Activated T-helper 1 cell treated with anti-CD3 and anti-CD28 coated beads, Interleukin-12 subunit alpha, Interleukin-12 subunit beta, Interleukin-2, Interleukin-4 antibody, amounts not matched to agents 30 ng/mL and 10 ng/mL and 1 ng/mL, durations not matched to agents 14 hours and 24 hours and 36 hours (primary cell): ENCODE measurements at regions of chr12 and their contacts with region 1.

Region 1: DNA sequence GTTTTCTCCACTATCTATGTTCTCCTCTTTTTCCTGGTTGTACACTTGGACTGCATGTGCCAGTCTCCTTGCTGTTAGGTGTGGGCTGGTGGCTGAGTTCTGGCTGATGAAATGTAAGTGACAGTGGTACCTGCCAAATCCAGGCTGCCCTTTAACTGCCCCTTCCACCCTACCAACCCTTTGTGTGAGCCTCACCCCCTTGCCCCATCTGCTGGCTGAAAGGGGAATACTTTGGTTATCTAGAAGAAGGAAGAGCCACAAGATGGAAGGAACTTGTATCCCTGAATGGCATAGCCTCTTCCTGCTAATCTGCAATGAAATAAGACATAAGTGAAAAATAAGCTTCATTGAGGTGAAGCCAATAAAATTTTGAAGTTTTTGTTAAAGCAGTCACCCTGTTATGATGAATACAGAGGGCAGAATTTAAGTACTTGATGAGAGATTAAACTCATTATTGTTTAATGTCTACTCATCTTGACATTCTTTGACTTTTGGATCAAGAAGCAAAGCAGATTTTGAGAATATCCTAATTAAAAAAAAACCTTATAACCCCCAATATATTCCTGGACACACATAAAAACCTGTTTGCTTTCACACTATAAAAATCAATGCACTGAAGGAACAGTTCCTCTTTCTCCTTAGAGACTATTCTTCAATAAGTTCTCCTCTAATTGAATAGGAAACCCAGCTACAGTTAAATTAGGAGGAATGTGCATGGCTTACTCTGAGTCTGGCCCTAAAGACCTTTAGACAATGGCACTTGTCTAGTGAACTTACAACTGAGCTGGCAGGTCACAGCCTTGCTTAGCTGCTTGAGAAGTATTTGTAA is 262.6 kb upstream of the BTG1 start:
- DNase-seq: peak; percentile 37
- H3K4me3 Mint-ChIP-seq: no peak overlapping the region
- H3K27ac Mint-ChIP-seq: no peak overlapping the region
- H3K4me1 Mint-ChIP-seq: peaks cover 46% of the 10 kb centered on the region
- H3K27me3 Mint-ChIP-seq: no peaks in the 10 kb centered on the region

Region 2: GRCh38 chr12:91382081-91382543 is 1026.2 kb before region 1 on chr12:
- intact Hi-C with region 1: loop called (anchors 1 kb)
- DNase-seq: peak; percentile 68
- H3K4me3 Mint-ChIP-seq: peak overlapping the region; percentile 76
- H3K27ac Mint-ChIP-seq: no peak overlapping the region
- H3K4me1 Mint-ChIP-seq: peaks cover 10% of the 10 kb centered on the region
- H3K27me3 Mint-ChIP-seq: peaks cover 5% of the 10 kb centered on the region

Region 3: GRCh38 chr12:91811481-91812287 is 596.6 kb before region 1 on chr12:
- intact Hi-C with region 1: loop called (anchors 10 kb)
- DNase-seq: peak; percentile 35
- H3K4me3 Mint-ChIP-seq: no peak overlapping the region
- H3K27ac Mint-ChIP-seq: no peak overlapping the region
- H3K4me1 Mint-ChIP-seq: peaks cover 10% of the 10 kb centered on the region
- H3K27me3 Mint-ChIP-seq: no peaks in the 10 kb centered on the region

Region 4: DNA sequence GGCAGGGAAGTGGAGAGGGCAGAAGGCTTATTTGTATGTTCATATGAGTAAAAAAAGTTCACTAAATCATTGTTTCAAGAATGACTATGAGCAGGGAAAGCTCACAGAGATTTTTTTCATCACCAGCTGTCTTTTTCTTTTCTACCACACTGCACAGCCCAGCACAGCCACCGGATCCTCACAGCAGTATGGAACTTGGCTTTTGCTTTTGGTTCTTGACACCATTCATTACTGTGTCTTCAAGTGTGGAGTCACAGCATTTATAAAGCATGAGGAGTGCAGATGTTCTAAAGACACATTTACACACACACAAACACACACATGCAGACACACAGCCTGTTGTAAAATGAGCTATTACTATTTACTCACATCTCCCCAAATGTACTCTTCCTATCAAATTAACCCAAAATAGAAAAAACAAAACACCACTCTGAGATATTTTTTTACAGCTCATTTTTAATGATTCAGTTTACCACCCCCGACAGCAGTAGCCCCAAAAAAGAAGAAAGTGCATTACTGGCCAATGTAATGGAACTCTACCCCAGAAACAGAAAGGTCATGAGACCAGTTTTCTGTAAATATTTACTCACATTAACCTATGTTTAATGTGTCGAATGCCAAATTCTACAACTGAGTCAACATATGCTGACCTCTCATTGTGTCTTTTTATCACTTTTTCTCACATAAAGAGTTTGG is 323.1 kb before region 1 on chr12:
- intact Hi-C with region 1: no loop called
- DNase-seq: no peak
- H3K4me3 Mint-ChIP-seq: no peak overlapping the region
- H3K27ac Mint-ChIP-seq: no peak overlapping the region
- H3K4me1 Mint-ChIP-seq: peaks cover 38% of the 10 kb centered on the region
- H3K27me3 Mint-ChIP-seq: no peaks in the 10 kb centered on the region

Region 5: DNA sequence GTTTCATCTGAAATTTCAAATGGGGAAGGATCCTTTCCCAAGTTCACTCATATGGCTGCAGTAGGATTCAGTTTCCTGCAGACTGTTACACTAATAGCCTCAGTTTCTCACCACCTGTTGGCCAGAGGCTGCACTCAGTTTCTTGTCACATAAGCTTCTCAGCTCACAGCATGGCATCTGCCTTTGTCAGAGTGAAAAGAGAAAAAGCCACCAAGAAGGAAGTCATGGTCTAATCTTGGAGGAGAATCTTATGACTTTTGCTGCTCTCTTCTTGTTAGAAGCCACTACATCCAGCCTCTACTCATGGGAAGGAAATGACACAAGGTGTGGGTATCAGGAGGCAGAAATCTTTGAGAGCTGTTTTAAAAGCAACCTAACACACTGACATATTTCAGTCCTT is 223.2 kb before region 1 on chr12:
- intact Hi-C with region 1: loop called (anchors 2 kb)
- DNase-seq: peak; percentile 46
- H3K4me3 Mint-ChIP-seq: peak overlapping the region; percentile 19
- H3K27ac Mint-ChIP-seq: peak overlapping the region; percentile 70
- H3K4me1 Mint-ChIP-seq: peaks cover 63% of the 10 kb centered on the region
- H3K27me3 Mint-ChIP-seq: no peaks in the 10 kb centered on the region

Region 6: DNA sequence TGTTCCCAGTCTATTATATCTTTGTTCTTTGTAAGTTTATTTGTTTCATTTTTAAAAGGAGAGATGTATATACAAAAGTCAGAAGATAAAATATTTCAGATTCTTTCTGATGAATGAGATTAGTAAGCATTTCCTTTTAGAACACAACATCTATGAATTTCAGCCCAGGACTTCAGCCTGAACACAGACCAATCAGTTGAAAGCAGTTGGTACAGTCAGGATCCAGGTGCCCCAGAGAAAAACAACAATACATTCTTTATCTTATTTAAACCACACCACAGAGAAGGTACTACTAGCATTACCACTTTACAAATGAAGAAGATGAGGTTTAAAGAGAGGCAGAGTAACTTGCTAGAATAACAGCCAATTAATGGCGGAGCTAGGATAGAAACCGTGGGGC is 148.4 kb before region 1 on chr12:
- intact Hi-C with region 1: no loop called
- DNase-seq: no peak
- H3K4me3 Mint-ChIP-seq: no peak overlapping the region
- H3K27ac Mint-ChIP-seq: peak overlapping the region; percentile 13
- H3K4me1 Mint-ChIP-seq: peaks cover 21% of the 10 kb centered on the region
- H3K27me3 Mint-ChIP-seq: no peaks in the 10 kb centered on the region

Region 7: GRCh38 chr12:92363295-92364146 is 44.8 kb before region 1 on chr12:
- intact Hi-C with region 1: loop called (anchors 1 kb)
- DNase-seq: no peak
- H3K4me3 Mint-ChIP-seq: peak overlapping the region; percentile 64
- H3K27ac Mint-ChIP-seq: peak overlapping the region; percentile 77
- H3K4me1 Mint-ChIP-seq: peaks cover 59% of the 10 kb centered on the region
- H3K27me3 Mint-ChIP-seq: no peaks in the 10 kb centered on the region

Region 8: GRCh38 chr12:92505254-92506231 is 97.3 kb after region 1 on chr12:
- intact Hi-C with region 1: loop called (anchors 1 kb)
- DNase-seq: peak; percentile 13
- H3K4me3 Mint-ChIP-seq: peak overlapping the region; percentile 77
- H3K27ac Mint-ChIP-seq: peak overlapping the region; percentile 93
- H3K4me1 Mint-ChIP-seq: peaks cover 47% of the 10 kb centered on the region
- H3K27me3 Mint-ChIP-seq: no peaks in the 10 kb centered on the region

Region 9: DNA sequence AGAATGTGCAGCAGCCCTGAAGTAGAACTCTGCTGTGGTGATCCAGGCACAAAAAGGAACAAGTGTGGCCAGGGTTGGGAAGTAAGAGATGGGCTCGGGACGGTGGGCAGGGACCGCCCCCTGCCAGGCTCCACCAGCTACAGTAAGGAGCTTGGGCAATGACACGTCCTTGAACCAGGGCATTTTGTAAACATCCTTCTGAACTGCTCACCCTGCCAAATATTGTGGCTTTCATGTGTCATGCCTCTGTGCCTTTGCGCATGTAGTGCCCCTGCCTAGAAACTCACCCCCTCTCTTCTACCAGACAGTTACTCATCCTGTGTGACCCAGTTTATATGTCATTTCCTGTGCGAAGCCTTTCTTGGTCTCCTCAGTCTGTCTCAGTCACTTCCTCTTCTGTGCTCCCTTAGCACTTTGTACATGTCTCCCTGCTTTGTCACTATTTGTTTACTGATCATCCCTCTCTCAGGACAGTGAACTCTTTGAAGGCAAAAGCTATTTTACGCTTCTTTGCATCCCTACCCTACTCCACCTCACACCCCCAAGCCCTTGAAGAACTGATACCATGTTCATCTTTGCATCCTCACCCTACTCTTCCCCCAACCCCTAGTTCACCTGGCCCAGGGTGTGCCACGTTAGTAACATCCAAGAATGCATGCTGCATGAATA is 185.6 kb after region 1 on chr12:
- intact Hi-C with region 1: loop called (anchors 2 kb)
- DNase-seq: peak; percentile 79
- H3K4me3 Mint-ChIP-seq: peak overlapping the region; percentile 72
- H3K27ac Mint-ChIP-seq: peak overlapping the region; percentile 99
- H3K4me1 Mint-ChIP-seq: peaks cover 63% of the 10 kb centered on the region
- H3K27me3 Mint-ChIP-seq: no peaks in the 10 kb centered on the region

Region 10: GRCh38 chr12:92745856-92746540 is 337.7 kb after region 1 on chr12:
- intact Hi-C with region 1: no loop called
- DNase-seq: no peak
- H3K4me3 Mint-ChIP-seq: no peak overlapping the region
- H3K27ac Mint-ChIP-seq: no peak overlapping the region
- H3K4me1 Mint-ChIP-seq: no peaks in the 10 kb centered on the region
- H3K27me3 Mint-ChIP-seq: peaks cover 6% of the 10 kb centered on the region